MCF 10A (cell line): ENCODE measurements at regions of chr3 and their contacts with region 1.

Region 1: GRCh38 chr3:83523470-83524073 is 1435.2 kb upstream of the CADM2 start:
- DNase-seq: peak; percentile 82
- H3K4me3 Mint-ChIP-seq: no peak overlapping the region
- H3K27ac Mint-ChIP-seq: no peak overlapping the region
- H3K4me1 Mint-ChIP-seq: peaks cover 6% of the 10 kb centered on the region
- H3K27me3 Mint-ChIP-seq: no peaks in the 10 kb centered on the region
- CTCF ChIP-seq: peak; percentile 76

Region 2: DNA sequence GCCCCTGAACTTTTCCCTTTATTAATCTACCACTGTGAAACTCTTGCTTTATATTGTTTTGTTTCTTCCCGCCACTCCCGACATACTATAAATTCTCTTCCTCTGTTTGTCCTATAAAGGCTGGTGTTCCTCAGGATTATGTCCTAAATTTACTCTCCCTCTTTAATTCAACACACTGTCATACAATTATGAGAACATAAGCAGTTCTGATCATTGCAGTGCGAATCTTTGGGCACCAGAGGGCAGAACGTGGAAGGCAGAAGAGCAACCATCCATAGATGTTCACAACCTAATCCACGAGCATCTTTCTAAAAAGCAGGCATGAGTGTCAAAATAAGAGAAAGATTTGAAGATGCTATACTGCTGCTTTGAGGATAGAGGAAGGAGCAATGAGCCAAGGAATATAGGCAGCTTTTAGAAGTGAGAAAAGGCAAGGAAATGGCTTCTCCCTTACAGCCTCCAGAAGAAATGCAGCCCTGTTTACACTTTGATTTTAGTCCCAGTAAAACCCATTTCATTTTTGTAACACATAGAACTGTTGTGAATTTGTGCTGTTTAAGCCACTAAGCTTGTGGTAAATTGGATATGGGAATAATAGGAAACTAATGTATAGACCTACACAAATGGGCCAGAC is 1941.5 kb before region 1 on chr3:
- CTCF ChIA-PET with region 1: no interaction called
- POLR2A ChIA-PET with region 1: no interaction called
- intact Hi-C with region 1: loop called (anchors 2 kb)
- DNase-seq: peak; percentile 55
- H3K4me3 Mint-ChIP-seq: no peak overlapping the region
- H3K27ac Mint-ChIP-seq: no peak overlapping the region
- H3K4me1 Mint-ChIP-seq: peaks cover 6% of the 10 kb centered on the region
- H3K27me3 Mint-ChIP-seq: no peaks in the 10 kb centered on the region
- CTCF ChIP-seq: peak; percentile 58

Region 3: DNA sequence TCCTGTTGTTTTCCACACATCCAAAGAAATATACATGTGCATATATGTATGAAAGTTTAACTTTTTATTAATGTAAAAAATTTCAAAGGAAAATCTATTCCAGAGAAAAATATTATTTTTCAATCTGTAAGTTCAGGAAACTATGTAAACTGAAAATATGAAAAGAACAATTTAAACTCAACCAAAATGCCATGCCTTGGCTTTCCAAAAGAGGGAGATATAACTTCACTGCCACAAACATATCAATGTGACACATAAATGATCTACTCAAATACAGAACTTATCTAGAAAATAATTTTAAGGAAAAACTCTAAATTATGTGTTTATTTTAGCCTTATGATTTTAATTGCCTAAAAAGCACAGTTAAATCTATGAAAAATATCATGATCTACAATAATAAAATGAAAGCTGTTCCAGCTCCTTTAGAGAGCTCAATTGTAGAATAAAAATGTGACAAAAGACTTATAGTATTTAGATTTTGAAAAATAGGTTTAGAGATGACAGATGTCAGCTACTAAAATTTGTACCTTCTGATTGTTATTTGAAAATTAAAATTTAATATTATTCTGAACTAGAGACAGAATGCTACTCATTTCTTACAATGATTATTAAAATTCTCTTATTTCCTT is 1857.0 kb before region 1 on chr3:
- CTCF ChIA-PET with region 1: no interaction called
- POLR2A ChIA-PET with region 1: no interaction called
- intact Hi-C with region 1: loop called (anchors 2 kb)
- DNase-seq: peak; percentile 39
- H3K4me3 Mint-ChIP-seq: no peak overlapping the region
- H3K27ac Mint-ChIP-seq: no peak overlapping the region
- H3K4me1 Mint-ChIP-seq: no peaks in the 10 kb centered on the region
- H3K27me3 Mint-ChIP-seq: no peaks in the 10 kb centered on the region
- CTCF ChIP-seq: peak; percentile 67

Region 4: DNA sequence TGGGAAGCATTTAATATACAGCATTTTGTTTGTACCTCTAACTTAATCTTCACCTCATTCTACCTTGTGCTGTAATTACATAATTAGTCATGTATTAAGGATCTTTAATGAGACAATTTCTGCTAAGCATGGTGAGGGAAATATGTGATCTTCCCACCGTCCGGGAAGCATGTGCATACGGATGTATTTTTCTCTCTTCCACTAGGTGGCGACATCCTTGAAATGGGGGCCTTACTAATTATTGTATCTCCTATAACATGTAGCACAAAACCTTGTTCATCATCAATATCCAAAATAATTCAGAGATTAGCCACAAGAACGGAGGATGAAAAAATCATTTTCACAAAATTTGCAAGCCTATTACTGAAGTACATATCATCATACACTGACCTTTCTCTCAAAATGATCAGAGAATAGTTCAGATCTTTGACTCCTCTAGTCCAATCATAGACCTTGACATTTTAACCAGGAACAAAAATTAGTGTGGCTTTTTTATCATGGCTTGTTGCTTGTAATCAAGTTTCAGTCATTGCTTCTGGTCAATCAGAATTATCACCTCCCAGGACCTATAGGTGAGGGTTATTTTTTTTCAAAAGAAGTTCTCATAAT is 1613.2 kb before region 1 on chr3:
- CTCF ChIA-PET with region 1: no interaction called
- POLR2A ChIA-PET with region 1: no interaction called
- intact Hi-C with region 1: loop called (anchors 1 kb)
- DNase-seq: peak; percentile 69
- H3K4me3 Mint-ChIP-seq: no peak overlapping the region
- H3K27ac Mint-ChIP-seq: no peak overlapping the region
- H3K4me1 Mint-ChIP-seq: no peaks in the 10 kb centered on the region
- H3K27me3 Mint-ChIP-seq: no peaks in the 10 kb centered on the region
- CTCF ChIP-seq: peak; percentile 67

Region 5: DNA sequence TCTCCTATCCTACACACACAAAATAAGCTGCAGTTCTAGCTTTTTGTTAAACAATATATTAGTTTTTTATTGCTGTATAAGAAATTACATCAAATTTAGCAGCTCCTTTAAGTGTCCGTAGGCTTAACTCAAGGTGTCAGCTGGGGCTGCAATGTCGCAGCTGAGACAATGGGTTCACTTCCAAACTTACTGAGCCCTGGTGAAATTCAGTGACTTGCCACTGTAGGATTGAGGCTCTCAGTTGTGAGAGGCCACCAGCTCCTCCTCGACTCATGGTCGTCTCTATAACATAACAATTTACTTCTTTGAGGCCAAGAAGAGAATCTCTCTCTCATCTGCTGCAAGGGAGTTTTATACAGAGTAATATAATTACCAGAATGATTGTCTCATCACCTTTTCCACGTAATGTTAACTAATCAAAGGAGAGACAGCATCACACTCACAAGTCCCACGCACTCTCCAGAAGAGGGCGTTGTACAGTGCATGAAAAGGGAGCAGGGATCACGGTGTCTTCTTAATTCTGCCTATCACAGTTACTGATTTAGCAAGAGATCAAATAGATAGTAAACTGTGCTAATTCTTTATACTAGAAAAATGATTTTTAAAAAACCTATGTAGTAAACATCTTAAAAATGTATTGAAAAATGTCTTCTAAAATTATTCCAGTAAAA is 1026.5 kb before region 1 on chr3:
- CTCF ChIA-PET with region 1: no interaction called
- POLR2A ChIA-PET with region 1: no interaction called
- intact Hi-C with region 1: loop called (anchors 5 kb)
- DNase-seq: peak; percentile 54
- H3K4me3 Mint-ChIP-seq: no peak overlapping the region
- H3K27ac Mint-ChIP-seq: no peak overlapping the region
- H3K4me1 Mint-ChIP-seq: no peaks in the 10 kb centered on the region
- H3K27me3 Mint-ChIP-seq: no peaks in the 10 kb centered on the region
- CTCF ChIP-seq: peak; percentile 11

Region 6: DNA sequence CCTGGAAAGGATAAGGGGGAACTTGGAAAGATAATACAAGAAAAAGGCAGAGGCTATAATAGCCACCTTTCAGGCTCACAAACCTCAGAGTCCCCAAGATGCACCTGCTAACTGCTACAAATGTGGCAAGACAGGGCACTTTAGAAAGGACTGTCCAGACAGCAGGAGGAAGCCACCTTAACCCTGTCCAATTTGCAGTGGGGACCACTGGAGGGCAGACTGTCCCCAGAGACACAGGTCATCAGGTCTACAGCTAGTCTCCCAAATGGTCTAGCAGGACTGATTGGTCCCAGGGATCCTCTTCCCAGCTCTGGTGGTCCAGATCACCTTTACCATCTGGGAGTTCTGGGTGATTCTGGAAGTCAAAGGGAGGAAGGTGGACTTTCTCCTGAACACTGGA is 879.6 kb before region 1 on chr3:
- CTCF ChIA-PET with region 1: no interaction called
- POLR2A ChIA-PET with region 1: no interaction called
- intact Hi-C with region 1: loop called (anchors 1 kb)
- DNase-seq: peak; percentile 34
- H3K4me3 Mint-ChIP-seq: no peak overlapping the region
- H3K27ac Mint-ChIP-seq: no peak overlapping the region
- H3K4me1 Mint-ChIP-seq: no peaks in the 10 kb centered on the region
- H3K27me3 Mint-ChIP-seq: no peaks in the 10 kb centered on the region
- CTCF ChIP-seq: peak; percentile 16

Region 7: DNA sequence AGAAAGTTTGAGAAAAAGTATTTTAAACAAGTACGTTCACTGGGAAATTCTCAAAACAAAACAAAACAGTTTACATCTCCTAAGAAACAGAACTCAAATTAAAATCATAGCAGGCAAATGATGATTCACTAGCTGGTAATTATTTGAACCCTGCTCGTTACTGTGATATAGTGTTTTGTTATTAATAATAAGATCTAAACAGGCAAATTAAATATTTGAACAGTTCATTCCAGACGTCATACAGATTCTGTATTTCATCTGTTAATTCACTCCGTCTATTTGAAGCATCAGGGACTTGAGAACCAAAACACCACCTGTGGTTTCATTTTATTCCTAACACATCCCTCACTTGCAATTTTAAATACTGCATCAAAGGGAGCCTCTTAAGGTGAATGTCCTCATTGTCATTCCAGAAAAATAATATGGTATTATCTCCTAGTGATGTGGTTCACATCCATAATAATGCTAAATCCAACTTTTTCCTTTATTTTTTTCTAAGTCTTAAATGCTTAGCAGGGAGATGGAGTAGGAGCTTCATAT is 44.3 kb after region 1 on chr3:
- CTCF ChIA-PET with region 1: no interaction called
- POLR2A ChIA-PET with region 1: no interaction called
- intact Hi-C with region 1: no loop called
- DNase-seq: no peak
- H3K4me3 Mint-ChIP-seq: no peak overlapping the region
- H3K27ac Mint-ChIP-seq: no peak overlapping the region
- H3K4me1 Mint-ChIP-seq: no peaks in the 10 kb centered on the region
- H3K27me3 Mint-ChIP-seq: no peaks in the 10 kb centered on the region
- CTCF ChIP-seq: no peak

Region 8: GRCh38 chr3:84772841-84773240 is 1249.3 kb after region 1 on chr3:
- CTCF ChIA-PET with region 1: no interaction called
- POLR2A ChIA-PET with region 1: no interaction called
- intact Hi-C with region 1: loop called (anchors 10 kb)
- DNase-seq: peak; percentile 38
- H3K4me3 Mint-ChIP-seq: no peak overlapping the region
- H3K27ac Mint-ChIP-seq: no peak overlapping the region
- H3K4me1 Mint-ChIP-seq: no peaks in the 10 kb centered on the region
- H3K27me3 Mint-ChIP-seq: no peaks in the 10 kb centered on the region
- CTCF ChIP-seq: no peak